ENCODE measurements at regions of chr22 and their contacts with region 1.

Region 1: DNA sequence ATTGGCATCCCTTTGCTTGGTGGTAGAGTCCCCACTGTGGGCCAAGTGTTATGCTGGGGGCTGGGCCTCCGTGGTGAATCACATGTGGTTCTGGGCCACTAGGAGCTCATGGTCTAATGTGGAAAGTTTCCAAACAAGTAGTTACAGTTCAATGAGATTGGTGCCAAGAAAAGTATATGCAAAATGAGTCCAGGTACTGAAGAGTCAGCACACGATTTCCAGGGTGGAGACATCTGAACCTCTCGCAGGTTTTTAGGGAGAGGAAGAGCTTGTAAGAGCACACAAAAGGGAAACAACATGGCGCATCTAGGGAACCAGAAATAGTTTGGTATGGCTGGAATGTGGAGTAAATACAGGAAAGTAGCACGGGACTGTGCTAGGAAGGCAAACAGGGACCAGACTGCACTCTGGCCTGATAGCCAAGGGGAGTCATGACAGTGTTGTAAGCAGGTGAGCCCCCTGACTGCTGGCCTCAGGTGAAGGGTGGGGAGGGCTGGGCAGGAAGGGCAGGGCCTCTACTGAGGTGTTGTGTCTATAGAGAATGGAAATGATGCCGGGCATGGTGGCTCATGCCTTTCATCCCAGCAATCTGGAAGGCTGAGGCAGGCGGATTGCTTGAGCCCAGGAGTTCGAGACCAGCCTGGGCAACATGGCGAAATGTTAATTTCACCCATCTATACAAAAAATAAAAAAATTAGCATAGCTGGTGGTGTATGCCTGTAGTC is 12.6 kb downstream of the POLR2F start:
- DNase-seq: no peak
- H3K4me3 ChIP-seq: no peak overlapping the region
- H3K27ac ChIP-seq: no peak overlapping the region
- H3K4me1 ChIP-seq: no peaks in the 10 kb centered on the region
- H3K27me3 ChIP-seq: no peaks in the 10 kb centered on the region
- CTCF ChIP-seq: no peak
- POLR2A ChIP-seq: no peak

Region 2: DNA sequence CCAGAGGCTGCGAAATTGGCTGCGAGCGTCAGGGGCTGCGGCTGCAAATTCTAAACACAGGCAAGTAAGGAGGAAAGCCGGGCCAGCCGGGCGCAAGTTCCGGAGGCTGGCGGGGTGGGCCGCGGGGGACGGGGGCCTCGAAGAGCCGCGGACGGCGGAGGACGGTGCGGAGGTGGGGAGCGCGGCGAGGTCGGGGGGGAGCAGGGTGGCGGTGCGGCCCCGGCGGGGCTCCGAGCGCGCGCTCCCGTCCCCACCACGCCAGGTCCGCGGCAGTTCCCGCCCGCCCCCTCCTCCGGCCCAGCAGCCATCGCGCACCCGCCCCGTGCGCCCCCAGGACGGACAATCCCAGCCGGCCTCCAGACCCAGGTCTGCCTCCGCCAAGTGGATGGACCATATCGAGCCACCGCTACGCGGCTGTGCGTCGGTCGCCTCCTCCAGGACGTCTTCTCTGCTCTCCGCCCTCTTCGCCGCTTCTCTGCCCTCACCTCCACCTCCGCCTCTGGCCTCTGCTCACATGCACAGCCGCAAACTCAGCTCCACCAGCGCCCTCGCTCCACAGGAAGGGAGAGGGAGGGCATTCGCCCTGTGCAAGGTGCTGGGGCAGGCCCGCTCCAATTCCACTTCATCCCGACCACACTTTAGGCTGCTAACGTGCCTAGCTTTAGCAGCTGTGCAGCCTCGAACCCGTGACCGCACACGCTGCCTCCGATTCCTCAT is 546.0 kb before region 1 on chr22:
- CTCF ChIA-PET with region 1: no interaction called
- POLR2A ChIA-PET with region 1: no interaction called
- dilution Hi-C with region 1: no loop called
- intact Hi-C with region 1: no loop called
- DNase-seq: peak; percentile 26
- H3K4me3 ChIP-seq: peak overlapping the region; percentile 3 to 11 (median 7)
- H3K27ac ChIP-seq: no peak overlapping the region
- H3K4me1 ChIP-seq: peaks cover 8% of the 10 kb centered on the region
- H3K27me3 ChIP-seq: peaks cover 0 to 14% of the 10 kb centered on the region in 2 experiments
- CTCF ChIP-seq: no peak
- POLR2A ChIP-seq: no peak

Region 3: DNA sequence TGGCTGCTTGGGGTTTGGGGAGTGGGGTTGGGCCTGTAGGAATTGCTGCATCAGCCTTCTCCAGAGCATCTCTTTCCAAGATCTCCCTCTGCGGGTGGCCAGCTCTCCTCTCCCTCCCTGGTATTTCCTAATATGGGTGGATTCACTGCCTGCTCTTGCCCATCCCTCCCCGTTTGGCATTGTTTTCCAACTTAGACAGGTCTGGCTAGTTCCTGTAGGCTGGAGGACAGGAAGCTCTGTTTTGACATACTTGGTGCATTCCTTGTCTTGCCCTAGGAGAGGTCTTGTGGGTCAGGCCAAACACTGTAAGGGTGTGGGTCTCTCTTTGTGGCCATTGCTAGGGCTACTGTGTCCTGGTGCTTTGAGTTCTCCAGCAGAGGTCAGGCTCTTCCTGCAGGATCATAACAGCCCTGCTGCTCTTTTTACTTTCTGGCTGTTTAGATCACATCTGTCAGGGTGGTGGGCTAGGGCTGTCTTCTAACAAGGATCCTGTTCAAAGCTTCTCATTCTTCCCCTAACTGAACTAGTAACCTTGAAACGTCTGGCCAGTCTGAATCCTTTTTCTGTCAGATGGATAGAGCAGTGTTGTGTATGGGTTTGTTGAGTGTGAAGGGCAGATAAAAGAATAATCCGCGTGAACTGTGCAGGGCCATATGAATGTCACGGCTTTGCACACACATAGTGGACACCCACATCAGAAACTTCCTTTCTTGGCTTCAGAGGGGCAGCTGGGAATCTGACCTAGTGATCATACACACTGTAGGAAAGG is 78.3 kb before region 1 on chr22:
- CTCF ChIA-PET with region 1: interaction called, 66 read pairs
- POLR2A ChIA-PET with region 1: no interaction called
- dilution Hi-C with region 1: no loop called
- intact Hi-C with region 1: loop called (anchors 1 kb)
- DNase-seq: peak; percentile 57
- H3K4me3 ChIP-seq: no peak overlapping the region
- H3K27ac ChIP-seq: peak overlapping the region; percentile 16
- H3K4me1 ChIP-seq: peaks cover 10% of the 10 kb centered on the region
- H3K27me3 ChIP-seq: no peaks in the 10 kb centered on the region
- CTCF ChIP-seq: peak; percentile 55 to 75
- POLR2A ChIP-seq: no peak

Region 4: DNA sequence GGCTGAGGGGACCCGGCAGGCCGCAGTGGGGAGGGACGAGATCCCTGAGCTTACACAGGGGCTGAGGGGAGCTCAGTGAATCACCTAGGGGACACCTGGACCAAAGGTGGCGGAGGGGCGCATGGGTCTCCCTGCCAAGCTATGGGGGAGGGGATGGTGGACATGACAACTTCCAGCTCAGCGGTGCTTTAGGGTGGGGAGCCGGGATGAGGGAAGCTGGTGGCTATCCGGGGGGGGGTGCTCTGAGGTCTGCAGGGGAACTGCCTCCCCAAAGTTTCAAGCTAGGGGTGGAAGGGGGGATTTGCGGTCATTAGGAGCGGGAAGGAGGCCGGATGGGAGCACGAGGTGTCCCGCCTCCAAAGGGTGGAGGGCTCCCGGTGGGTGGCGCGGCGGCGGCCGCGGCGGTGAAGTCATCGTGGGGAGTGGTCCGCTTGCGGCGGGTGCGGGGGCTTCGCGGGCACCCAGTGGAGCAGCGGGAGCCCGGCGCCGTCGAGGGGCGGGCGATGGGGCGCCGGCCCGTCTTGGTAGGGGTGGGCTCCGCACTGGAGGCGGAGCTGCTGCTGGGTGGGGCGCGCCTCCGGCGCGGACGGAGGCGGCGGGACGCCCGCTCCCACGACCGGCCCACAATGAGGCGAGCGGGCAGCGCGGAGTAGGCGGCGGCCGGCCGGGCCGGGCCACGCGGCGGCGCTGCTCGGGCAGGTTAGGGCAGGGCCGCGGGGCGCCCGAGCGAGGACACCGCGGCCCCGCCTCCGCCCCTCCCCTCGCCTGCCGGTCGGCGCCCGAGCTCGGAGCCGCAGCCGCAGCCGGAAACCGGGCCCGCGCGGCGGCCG is 60.4 kb before region 1 on chr22 and contains the start of gene MICALL1:
- CTCF ChIA-PET with region 1: interaction called, 11 read pairs
- POLR2A ChIA-PET with region 1: no interaction called
- dilution Hi-C with region 1: no loop called
- intact Hi-C with region 1: no loop called
- DNase-seq: peak; percentile 69
- H3K4me3 ChIP-seq: peak within 1 kb of the TSS; percentile 55 to 76 (median 67)
- H3K27ac ChIP-seq: peak within 1 kb of the TSS; percentile 94
- H3K4me1 ChIP-seq: peaks cover 20% of the 10 kb centered on the region
- H3K27me3 ChIP-seq: no peaks in the 10 kb centered on the region
- CTCF ChIP-seq: no peak
- POLR2A ChIP-seq: peak; percentile 73
- total RNA-seq, gene MICALL1: 65.2 and 66.9 TPM in 2 replicates

Region 5: GRCh38 chr22:37933711-37934376 is 32.3 kb before region 1 on chr22:
- CTCF ChIA-PET with region 1: interaction called, 7 read pairs
- POLR2A ChIA-PET with region 1: no interaction called
- dilution Hi-C with region 1: no loop called
- intact Hi-C with region 1: loop called (anchors 1 kb)
- DNase-seq: peak; percentile 95
- H3K4me3 ChIP-seq: no peak overlapping the region
- H3K27ac ChIP-seq: peak overlapping the region; percentile 30
- H3K4me1 ChIP-seq: peaks cover 29% of the 10 kb centered on the region
- H3K27me3 ChIP-seq: no peaks in the 10 kb centered on the region
- CTCF ChIP-seq: peak; percentile 99 to 100
- POLR2A ChIP-seq: peak; percentile 27

Region 6: DNA sequence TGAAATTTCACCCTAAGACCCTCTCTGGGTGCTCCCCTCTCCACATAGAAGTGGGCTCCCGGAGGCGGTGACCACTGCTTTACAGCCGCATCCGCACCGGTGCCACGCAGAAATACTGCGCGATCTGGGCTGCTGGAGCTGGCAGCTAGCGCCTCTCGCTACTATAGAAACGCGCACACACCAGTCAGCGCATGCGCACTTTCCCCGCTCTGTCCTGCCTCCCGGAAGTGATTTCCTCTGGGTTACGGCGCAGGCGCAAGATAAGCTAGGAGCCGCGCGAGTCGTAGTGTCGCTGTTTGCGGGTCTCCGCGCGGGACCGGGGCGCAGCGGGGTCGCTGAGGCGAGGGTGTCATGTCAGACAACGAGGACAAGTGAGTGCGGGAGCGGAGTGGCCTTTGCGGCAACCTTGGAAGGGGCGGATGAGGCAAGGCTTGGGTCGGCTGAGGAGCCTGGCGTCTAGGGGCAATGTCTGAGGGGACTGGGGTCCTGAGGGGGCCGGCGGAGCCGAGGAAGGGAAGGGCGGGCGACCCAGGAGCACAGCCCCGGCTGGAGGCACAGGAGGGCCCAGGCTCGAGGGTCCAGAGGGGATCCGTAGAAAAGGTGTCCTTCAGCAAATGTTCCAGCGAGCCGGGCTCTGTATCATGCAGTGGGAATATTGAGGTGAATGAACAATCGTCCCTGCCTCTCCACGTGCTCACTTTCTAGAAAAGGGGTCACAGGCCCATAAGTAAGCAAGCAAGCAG is 12.5 kb before region 1 on chr22 and contains the starts of genes C22orf23 and POLR2F:
- CTCF ChIA-PET with region 1: interaction called, 10 read pairs
- POLR2A ChIA-PET with region 1: no interaction called
- dilution Hi-C with region 1: no loop called
- intact Hi-C with region 1: no loop called
- DNase-seq: peak; percentile 97
- H3K4me3 ChIP-seq: peak within 1 kb of the TSS; percentile 7 to 96 (median 54)
- H3K27ac ChIP-seq: no peak within 1 kb of the TSS
- H3K4me1 ChIP-seq: peaks cover 14% of the 10 kb centered on the region
- H3K27me3 ChIP-seq: no peaks in the 10 kb centered on the region
- CTCF ChIP-seq: no peak
- POLR2A ChIP-seq: peak; percentile 93
- total RNA-seq, gene C22orf23: 0.44 and 0.46 TPM in 2 replicates
- total RNA-seq, gene POLR2F: 98.3 and 106 TPM in 2 replicates

Region 7: GRCh38 chr22:37994049-37994448 is 27.9 kb after region 1 on chr22:
- CTCF ChIA-PET with region 1: interaction called, 10 read pairs
- POLR2A ChIA-PET with region 1: no interaction called
- dilution Hi-C with region 1: no loop called
- intact Hi-C with region 1: no loop called
- DNase-seq: no peak
- H3K4me3 ChIP-seq: no peak overlapping the region
- H3K27ac ChIP-seq: no peak overlapping the region
- H3K4me1 ChIP-seq: no peaks in the 10 kb centered on the region
- H3K27me3 ChIP-seq: no peaks in the 10 kb centered on the region
- CTCF ChIP-seq: no peak
- POLR2A ChIP-seq: no peak

Region 8: GRCh38 chr22:38114484-38115398 is 148.6 kb after region 1 on chr22:
- CTCF ChIA-PET with region 1: no interaction called
- POLR2A ChIA-PET with region 1: no interaction called
- dilution Hi-C with region 1: no loop called
- intact Hi-C with region 1: no loop called
- DNase-seq: peak; percentile 77
- H3K4me3 ChIP-seq: no peak overlapping the region
- H3K27ac ChIP-seq: no peak overlapping the region
- H3K4me1 ChIP-seq: no peaks in the 10 kb centered on the region
- H3K27me3 ChIP-seq: no peaks in the 10 kb centered on the region
- CTCF ChIP-seq: peak; percentile 96 to 99
- POLR2A ChIP-seq: no peak